ENCODE measurements at regions of chr4 and their contacts with region 1.

Region 1: GRCh38 chr4:24607334-24607733 is 23.0 kb upstream of the DHX15 start:
- DNase-seq: peak in 1 of 10 donors; percentile 47
- H3K4me3 ChIP-seq: no peak overlapping the region
- H3K27ac ChIP-seq: peak overlapping the region in 2 of 59 donors; percentile 28 to 36
- H3K27me3 ChIP-seq: no peaks in the 10 kb centered on the region
- CTCF ChIP-seq: peak in 29 of 56 donors; percentile 5 to 66 (median 36)

Region 2: DNA sequence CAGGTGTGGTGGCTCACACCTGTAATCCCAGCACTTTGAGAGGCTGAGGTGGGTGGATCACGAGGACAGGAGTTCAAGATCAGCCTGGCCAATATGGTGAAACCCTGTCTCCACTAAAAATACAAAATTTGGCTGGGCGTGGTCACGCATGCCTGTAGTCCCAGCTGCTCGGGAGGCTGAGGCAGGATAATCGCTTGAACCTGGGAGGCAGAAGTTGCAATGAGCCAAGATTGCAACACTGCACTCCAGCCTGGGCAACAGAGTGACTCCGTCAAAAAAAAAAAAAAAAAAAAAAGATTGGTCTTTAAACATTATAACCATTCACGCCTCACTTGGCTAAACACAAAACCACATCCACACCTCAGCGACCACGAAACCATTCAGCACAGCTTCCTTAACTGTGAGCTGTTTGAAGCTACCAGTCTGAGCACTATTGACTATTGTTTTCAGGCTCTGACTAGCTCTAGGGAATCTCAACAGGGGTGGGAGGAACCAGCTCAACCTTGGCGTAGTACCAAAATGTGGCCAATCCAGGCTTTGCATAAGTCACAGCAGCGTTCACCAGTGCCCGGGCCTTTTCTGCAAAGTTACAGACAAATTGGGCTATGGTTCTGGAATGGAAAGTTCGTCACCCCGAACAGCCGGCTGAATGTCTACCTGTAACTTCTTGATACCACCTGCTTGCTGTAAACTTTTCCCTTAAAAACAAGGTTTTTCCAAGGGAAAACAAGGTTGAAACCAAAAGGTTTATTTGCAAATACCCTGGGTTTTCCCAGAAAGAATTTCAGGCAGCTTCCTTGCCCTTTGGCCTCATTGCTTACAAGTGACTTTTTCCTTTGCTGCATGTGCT is 50.7 kb after region 1 on chr4:
- intact Hi-C with region 1: loop called in 1 of 2 experiments (anchors 5 kb)
- DNase-seq: peak; percentile 10 to 92 (median 76)
- H3K4me3 ChIP-seq: peak overlapping the region in 6 of 59 donors; percentile 7 to 40 (median 11)
- H3K27ac ChIP-seq: peak overlapping the region in 58 of 59 donors; percentile 44 to 97 (median 90)
- H3K27me3 ChIP-seq: no peaks in the 10 kb centered on the region
- CTCF ChIP-seq: peak in 2 of 56 donors; percentile 22 to 30

Region 3: DNA sequence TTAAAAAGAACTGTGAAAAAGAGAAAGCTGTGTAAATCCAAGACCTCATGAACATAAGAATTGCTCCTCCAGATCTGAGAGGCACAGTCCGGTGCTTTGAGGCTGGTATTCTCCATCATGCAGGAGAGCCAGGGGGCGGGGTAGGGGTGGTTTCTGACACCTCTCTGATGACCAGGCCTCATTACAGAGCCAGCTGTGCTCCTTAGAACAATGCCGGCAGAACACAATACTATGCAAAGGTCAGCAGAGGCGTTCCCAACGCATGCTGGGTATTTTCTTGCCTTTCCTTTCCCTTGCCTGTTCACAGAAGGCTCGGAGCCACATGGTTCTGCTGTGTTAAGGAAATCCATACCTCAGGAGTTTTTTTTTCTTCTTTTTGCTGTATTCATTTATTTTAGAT is 96.8 kb after region 1 on chr4:
- intact Hi-C with region 1: loop called (anchors 5 to 10 kb)
- DNase-seq: no peak
- H3K4me3 ChIP-seq: no peak overlapping the region
- H3K27ac ChIP-seq: peak overlapping the region in 1 of 59 donors; percentile 9
- H3K27me3 ChIP-seq: no peaks in the 10 kb centered on the region
- CTCF ChIP-seq: no peak